CD4-positive, alpha-beta memory T cell (primary cell): ENCODE measurements at regions of chr3 and their contacts with region 1.

Region 1: DNA sequence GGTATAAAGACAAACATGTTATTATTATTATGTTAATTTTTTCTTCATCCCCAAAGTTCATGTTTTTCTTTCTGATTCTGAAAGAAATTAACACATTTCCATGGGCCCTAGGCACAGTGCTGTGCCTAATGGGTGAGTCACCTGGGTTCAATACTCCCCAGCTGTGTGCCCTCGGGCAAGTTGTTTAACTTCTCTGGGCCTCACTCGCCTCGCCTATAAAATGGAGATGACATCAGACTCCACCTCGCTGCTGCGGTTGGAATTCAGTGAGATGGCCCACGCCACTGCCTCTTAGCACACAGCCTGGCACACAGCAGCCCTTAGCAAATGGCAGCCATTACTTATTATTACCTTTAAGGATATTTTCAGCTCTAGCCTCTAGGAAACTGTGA is 22.6 kb downstream of the DNASE1L3 start:
- DNase-seq: no peak
- H3K4me3 ChIP-seq: no peak overlapping the region
- H3K4me3 Mint-ChIP-seq: no peak overlapping the region
- H3K27ac ChIP-seq: no peak overlapping the region
- H3K27ac Mint-ChIP-seq: no peak overlapping the region
- H3K4me1 ChIP-seq: no peaks in the 10 kb centered on the region
- H3K4me1 Mint-ChIP-seq: peaks cover 0 to 4% (median 3%) of the 10 kb centered on the region in 4 donors
- H3K27me3 ChIP-seq: no peaks in the 10 kb centered on the region
- H3K27me3 Mint-ChIP-seq: no peaks in the 10 kb centered on the region

Region 2: DNA sequence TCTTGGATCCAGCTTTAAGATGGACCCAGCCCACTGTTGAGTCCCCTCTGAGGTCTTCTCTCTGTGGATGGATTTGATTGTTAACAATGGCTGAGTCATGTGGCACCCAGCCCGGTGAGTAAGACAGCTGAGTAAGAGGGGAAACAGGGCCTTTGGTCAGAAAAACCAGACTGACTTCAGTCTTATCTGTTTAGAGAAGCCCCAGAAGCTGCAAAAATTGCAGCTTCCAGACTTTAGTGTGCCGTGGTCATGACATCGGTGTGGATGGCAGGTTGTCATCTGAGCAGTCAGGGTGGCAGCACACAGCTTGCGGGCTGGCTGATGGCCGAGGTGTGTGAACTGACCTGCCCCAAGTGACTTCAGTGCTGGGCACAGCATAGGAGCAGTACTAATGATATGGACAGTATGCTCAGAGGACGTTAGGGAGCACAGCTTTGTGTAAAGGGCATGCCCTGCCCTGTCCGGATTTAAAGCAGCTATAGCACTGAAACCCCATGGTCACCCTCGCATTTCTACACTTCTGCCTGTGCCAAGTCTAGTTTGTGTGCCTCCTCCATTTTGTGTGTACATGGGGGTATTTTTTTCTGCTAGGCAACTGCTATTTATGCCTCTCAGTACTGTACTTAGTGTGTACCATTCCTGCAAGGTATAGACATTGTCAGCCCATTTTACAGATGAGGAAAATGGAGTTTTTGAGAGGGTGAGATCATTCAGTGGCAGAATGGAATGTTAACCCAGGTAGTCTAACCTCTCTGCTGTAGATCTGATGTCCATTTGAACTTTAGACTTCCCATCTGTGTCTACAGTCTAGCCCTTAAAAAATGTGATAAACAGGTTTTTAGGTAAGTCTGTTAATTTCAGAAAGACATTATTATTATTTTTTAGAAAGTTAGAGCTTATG is 135.5 kb before region 1 on chr3:
- CTCF ChIA-PET with region 1: no interaction called
- POLR2A ChIA-PET with region 1: no interaction called
- intact Hi-C with region 1: no loop called
- DNase-seq: no peak
- H3K4me3 ChIP-seq: no peak overlapping the region
- H3K4me3 Mint-ChIP-seq: no peak overlapping the region
- H3K27ac ChIP-seq: no peak overlapping the region
- H3K27ac Mint-ChIP-seq: peak overlapping the region in 1 of 7 donors; percentile 12
- H3K4me1 ChIP-seq: no peaks in the 10 kb centered on the region
- H3K4me1 Mint-ChIP-seq: peaks cover 0 to 4% (median under 1%) of the 10 kb centered on the region in 4 donors
- H3K27me3 ChIP-seq: no peaks in the 10 kb centered on the region
- H3K27me3 Mint-ChIP-seq: no peaks in the 10 kb centered on the region

Region 3: DNA sequence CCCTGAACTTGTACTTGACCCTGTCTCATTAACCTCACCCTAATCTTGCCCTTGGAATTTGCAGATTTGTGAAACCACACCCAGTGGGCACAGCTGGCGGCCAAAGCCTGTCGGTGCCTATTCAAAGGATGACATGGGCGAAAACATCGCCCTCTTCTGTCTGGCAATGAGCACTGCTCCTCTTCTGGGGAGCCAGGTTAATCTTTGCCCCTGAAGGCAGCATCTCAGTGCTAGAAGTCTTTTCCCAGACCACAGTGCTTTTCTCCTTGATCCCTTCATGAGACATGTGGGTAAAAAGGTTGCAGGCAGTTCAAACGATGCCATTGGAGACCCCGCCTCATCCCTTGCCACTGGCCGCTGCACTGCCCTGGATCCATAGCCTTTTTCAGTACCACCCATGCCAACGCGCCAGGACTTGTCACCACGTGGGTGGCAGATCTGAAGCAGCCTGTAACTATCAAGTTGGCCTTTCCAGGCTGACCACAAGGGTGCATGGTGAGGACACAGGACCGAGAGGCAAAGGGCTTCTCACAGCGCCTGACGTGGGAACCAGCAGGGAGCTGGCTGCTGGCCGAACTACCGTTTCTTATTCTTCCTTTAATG is 29.1 kb after region 1 on chr3:
- CTCF ChIA-PET with region 1: interaction called, 90 read pairs
- POLR2A ChIA-PET with region 1: no interaction called
- intact Hi-C with region 1: loop called (anchors 1 kb)
- DNase-seq: peak; percentile 47 to 56 (median 50)
- H3K4me3 ChIP-seq: no peak overlapping the region
- H3K4me3 Mint-ChIP-seq: peak overlapping the region in 1 of 8 donors; percentile 61
- H3K27ac ChIP-seq: no peak overlapping the region
- H3K27ac Mint-ChIP-seq: no peak overlapping the region
- H3K4me1 ChIP-seq: peaks cover 6% of the 10 kb centered on the region
- H3K4me1 Mint-ChIP-seq: peaks cover 3 to 9% (median 5%) of the 10 kb centered on the region in 4 donors
- H3K27me3 ChIP-seq: no peaks in the 10 kb centered on the region
- H3K27me3 Mint-ChIP-seq: peaks cover 0 to 2% of the 10 kb centered on the region in 2 donors

Region 4: GRCh38 chr3:58299839-58300516 is 111.8 kb after region 1 on chr3:
- CTCF ChIA-PET with region 1: interaction called, 14 read pairs
- POLR2A ChIA-PET with region 1: no interaction called
- intact Hi-C with region 1: no loop called
- DNase-seq: no peak
- H3K4me3 ChIP-seq: no peak overlapping the region
- H3K4me3 Mint-ChIP-seq: no peak overlapping the region
- H3K27ac ChIP-seq: no peak overlapping the region
- H3K27ac Mint-ChIP-seq: no peak overlapping the region
- H3K4me1 ChIP-seq: no peaks in the 10 kb centered on the region
- H3K4me1 Mint-ChIP-seq: no peaks in the 10 kb centered on the region
- H3K27me3 ChIP-seq: peaks cover 9% of the 10 kb centered on the region
- H3K27me3 Mint-ChIP-seq: peaks cover 15 to 24% of the 10 kb centered on the region in 2 donors

Region 5: DNA sequence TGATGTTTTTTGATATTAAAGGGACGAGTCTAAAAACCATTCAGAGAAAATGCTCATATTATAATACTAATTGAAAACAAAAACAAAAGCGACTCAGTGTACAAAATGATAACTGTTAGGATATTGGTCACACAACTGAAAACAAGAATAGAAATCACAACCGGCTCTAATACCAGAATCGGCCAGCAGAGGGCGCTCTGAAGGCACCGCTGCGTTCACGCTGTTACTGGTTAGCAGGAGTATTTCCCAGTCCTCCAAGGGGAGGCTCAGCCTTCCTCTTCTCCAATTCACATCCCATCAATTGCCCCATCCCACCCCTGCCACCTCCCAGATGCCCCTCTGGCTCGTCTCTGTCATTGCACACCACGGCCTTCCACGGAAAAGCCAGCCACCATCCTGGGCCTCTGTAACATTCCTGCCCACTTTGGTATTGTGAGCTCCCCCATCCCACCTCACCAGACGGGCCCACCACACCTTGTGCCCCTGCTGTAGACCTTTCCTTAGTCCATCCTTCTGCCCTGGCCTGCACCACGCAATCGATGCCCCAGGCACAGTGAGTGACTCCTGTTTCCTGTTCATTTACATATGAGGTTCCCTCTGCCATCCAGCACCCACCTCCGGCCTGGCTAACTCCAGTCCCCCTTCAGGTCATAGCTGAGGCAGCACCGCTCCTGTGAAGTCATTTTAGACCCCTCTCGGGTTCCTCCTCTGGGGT is 380.6 kb after region 1 on chr3:
- CTCF ChIA-PET with region 1: no interaction called
- POLR2A ChIA-PET with region 1: no interaction called
- intact Hi-C with region 1: no loop called
- DNase-seq: peak in 4 of 5 donors; percentile 37 to 50 (median 41)
- H3K4me3 ChIP-seq: no peak overlapping the region
- H3K4me3 Mint-ChIP-seq: peak overlapping the region; percentile 2 to 72 (median 54)
- H3K27ac ChIP-seq: no peak overlapping the region
- H3K27ac Mint-ChIP-seq: peak overlapping the region in 2 of 7 donors; percentile 79 to 81
- H3K4me1 ChIP-seq: peaks cover 7% of the 10 kb centered on the region
- H3K4me1 Mint-ChIP-seq: peaks cover 4 to 7% (median 6%) of the 10 kb centered on the region in 4 donors
- H3K27me3 ChIP-seq: no peaks in the 10 kb centered on the region
- H3K27me3 Mint-ChIP-seq: peaks cover 2 to 7% of the 10 kb centered on the region in 2 donors